ENCODE measurements at regions of chr15 and their contacts with region 1.

Region 1: GRCh38 chr15:87099916-87100315 is 1020.2 kb downstream of the AGBL1 start:
- DNase-seq: no peak
- ATAC-seq: no peak
- H3K4me3 ChIP-seq: no peak overlapping the region
- H3K27ac ChIP-seq: no peak overlapping the region
- H3K4me1 ChIP-seq: no peaks in the 10 kb centered on the region
- H3K27me3 ChIP-seq: no peaks in the 10 kb centered on the region
- CTCF ChIP-seq: no peak
- POLR2A ChIP-seq: no peak

Region 2: GRCh38 chr15:87080547-87080946 is 19.4 kb before region 1 on chr15:
- intact Hi-C with region 1: no loop called
- DNase-seq: no peak
- ATAC-seq: no peak
- H3K4me3 ChIP-seq: no peak overlapping the region
- H3K27ac ChIP-seq: no peak overlapping the region
- H3K4me1 ChIP-seq: no peaks in the 10 kb centered on the region
- H3K27me3 ChIP-seq: peaks cover 0 to 4% (median 0%) of the 10 kb centered on the region in 9 donors
- CTCF ChIP-seq: no peak
- POLR2A ChIP-seq: no peak

Region 3: DNA sequence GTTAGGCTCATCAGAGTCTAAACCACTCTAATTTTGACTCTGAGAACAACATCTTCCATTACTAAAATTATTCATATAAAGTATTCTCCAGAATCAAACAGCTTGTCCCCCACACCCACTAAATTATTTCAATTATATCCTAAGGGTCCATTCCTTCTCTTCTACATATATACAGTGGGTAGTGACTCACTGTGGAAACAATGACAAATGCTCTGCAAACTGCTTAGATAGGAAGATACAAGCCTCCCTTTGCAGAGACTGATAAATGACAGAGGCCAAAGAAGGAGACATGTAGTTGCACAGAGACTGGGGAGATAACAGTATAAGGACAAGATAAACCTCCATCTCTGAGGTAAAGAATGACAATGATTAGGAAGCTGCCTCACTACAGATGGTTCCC is 67.1 kb after region 1 on chr15:
- intact Hi-C with region 1: loop called in 1 of 10 experiments (anchors 10 kb)
- DNase-seq: no peak
- ATAC-seq: no peak
- H3K4me3 ChIP-seq: no peak overlapping the region
- H3K27ac ChIP-seq: no peak overlapping the region
- H3K4me1 ChIP-seq: no peaks in the 10 kb centered on the region
- H3K27me3 ChIP-seq: peaks cover 0 to 5% (median 0%) of the 10 kb centered on the region in 9 donors
- CTCF ChIP-seq: no peak
- POLR2A ChIP-seq: no peak

Region 4: DNA sequence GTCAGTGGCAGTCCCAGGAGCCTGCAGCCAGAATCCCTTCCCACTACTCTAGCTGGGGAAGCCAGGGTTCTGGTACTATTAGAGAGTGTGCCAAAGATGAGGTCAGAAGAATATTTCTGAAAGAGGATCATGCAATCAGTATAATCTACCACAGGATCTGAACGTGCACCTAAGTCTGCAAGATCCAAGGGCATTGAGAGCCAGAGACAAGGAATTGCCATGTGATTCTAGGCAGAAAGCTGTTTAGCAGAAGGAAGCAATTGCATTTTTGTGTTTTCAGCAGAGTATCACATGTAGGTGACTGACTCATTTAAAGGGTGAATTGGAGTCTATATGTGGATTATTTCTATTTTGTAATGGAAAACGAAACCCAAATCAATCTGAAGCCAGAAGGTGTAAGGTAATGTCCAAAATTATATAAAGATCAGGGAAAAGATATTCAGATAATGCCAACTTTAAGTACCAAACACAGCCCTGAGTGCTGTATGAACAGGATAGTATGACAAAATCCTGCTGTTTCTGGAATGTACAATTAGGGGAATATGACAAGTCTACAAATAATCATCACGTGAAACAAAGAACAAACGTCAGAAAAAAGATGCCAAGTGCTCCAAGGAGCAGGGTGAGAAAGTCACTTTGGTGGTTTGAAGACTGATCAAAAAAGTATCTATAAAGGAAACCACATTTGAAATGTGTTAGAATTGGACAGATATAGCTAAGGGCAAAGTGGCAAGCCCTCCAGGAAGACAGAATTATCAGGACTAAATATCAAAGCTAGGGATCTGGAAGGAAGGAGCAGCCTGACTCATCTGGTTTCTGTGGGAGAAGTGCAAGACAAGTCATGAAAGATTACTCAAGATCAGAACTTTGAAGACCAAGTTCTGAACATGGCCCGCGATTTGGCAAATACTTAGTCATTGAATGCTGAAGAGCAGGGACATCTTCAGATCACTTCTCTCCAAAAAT is 120.0 kb after region 1 on chr15:
- intact Hi-C with region 1: loop called in 1 of 10 experiments (anchors 10 kb)
- DNase-seq: no peak
- ATAC-seq: no peak
- H3K4me3 ChIP-seq: no peak overlapping the region
- H3K27ac ChIP-seq: no peak overlapping the region
- H3K4me1 ChIP-seq: no peaks in the 10 kb centered on the region
- H3K27me3 ChIP-seq: no peaks in the 10 kb centered on the region
- CTCF ChIP-seq: no peak
- POLR2A ChIP-seq: no peak

Measured in heart left ventricle (tissue), 16 donors.